ENCODE measurements at regions of chr6 and their contacts with region 1.

Region 1: GRCh38 chr6:26285143-26286134 is 79.6 kb upstream of the BTN3A2 start:
- DNase-seq: peak; percentile 89 to 98 (median 91)
- H3K4me3 ChIP-seq: peak overlapping the region; percentile 75
- H3K4me3 Mint-ChIP-seq: peak overlapping the region; percentile 83 to 97 (median 89)
- H3K27ac ChIP-seq: peak overlapping the region; percentile 97
- H3K27ac Mint-ChIP-seq: peak overlapping the region; percentile 93 to 98 (median 98)
- H3K4me1 ChIP-seq: peaks cover 15% of the 10 kb centered on the region
- H3K4me1 Mint-ChIP-seq: peaks cover 22 to 29% (median 23%) of the 10 kb centered on the region in 3 donors
- H3K27me3 ChIP-seq: no peaks in the 10 kb centered on the region
- H3K27me3 Mint-ChIP-seq: peaks cover 0 to 20% of the 10 kb centered on the region in 2 donors

Region 2: DNA sequence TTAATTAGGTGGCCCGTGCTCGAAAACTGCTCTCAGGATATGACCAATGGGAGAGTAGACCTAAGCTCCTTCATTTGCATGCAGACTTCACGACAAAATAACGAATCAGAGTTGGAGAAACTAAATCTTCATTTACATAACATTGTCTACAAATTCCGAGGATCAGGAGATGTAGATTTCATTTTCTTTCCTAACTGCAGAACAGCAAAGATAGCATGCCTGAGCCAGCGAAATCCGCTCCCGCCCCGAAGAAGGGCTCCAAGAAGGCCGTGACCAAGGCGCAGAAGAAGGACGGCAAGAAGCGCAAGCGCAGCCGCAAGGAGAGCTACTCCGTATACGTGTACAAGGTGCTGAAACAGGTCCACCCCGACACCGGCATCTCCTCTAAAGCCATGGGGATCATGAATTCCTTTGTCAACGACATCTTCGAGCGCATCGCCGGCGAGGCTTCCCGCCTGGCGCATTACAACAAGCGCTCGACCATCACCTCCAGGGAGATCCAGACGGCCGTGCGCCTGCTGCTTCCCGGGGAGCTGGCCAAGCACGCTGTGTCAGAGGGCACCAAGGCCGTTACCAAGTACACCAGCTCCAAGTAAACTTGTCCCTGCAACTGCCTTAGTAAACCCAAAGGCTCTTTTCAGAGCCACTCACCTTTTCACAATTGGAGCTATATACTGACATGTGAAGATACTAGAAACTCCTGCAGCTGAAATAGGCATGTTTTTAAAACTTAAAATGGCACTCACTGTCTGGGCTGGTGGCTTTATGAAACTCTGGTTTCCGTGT is 101.7 kb before region 1 on chr6:
- CTCF ChIA-PET with region 1: interaction called, 4 read pairs
- POLR2A ChIA-PET with region 1: interaction called, 22 read pairs
- DNase-seq: peak; percentile 31 to 78 (median 72)
- H3K4me3 ChIP-seq: peak overlapping the region; percentile 81
- H3K4me3 Mint-ChIP-seq: peak overlapping the region; percentile 86 to 99 (median 97)
- H3K27ac ChIP-seq: peak overlapping the region; percentile 71
- H3K27ac Mint-ChIP-seq: peak overlapping the region; percentile 71 to 99 (median 96)
- H3K4me1 ChIP-seq: peaks cover 33% of the 10 kb centered on the region
- H3K4me1 Mint-ChIP-seq: peaks cover 41 to 53% (median 44%) of the 10 kb centered on the region in 3 donors
- H3K27me3 ChIP-seq: no peaks in the 10 kb centered on the region
- H3K27me3 Mint-ChIP-seq: no peaks in the 10 kb centered on the region

Region 3: GRCh38 chr6:26223650-26224546 is 61.5 kb before region 1 on chr6:
- CTCF ChIA-PET with region 1: no interaction called
- POLR2A ChIA-PET with region 1: interaction called, 15 read pairs
- DNase-seq: peak; percentile 57 to 83 (median 78)
- H3K4me3 ChIP-seq: peak overlapping the region; percentile 87
- H3K4me3 Mint-ChIP-seq: no peak overlapping the region
- H3K27ac ChIP-seq: peak overlapping the region; percentile 72
- H3K27ac Mint-ChIP-seq: no peak overlapping the region
- H3K4me1 ChIP-seq: peaks cover 17% of the 10 kb centered on the region
- H3K4me1 Mint-ChIP-seq: peaks cover under 1 to 7% (median 7%) of the 10 kb centered on the region in 3 donors
- H3K27me3 ChIP-seq: no peaks in the 10 kb centered on the region
- H3K27me3 Mint-ChIP-seq: no peaks in the 10 kb centered on the region

Region 4: GRCh38 chr6:26249957-26250697 is 35.3 kb before region 1 on chr6:
- CTCF ChIA-PET with region 1: interaction called, 31 read pairs
- POLR2A ChIA-PET with region 1: interaction called, 59 read pairs
- DNase-seq: peak; percentile 58 to 89 (median 77)
- H3K4me3 ChIP-seq: peak overlapping the region; percentile 94
- H3K4me3 Mint-ChIP-seq: peak overlapping the region; percentile 95 to 99 (median 97)
- H3K27ac ChIP-seq: peak overlapping the region; percentile 74
- H3K27ac Mint-ChIP-seq: peak overlapping the region; percentile 56 to 96 (median 93)
- H3K4me1 ChIP-seq: peaks cover 10% of the 10 kb centered on the region
- H3K4me1 Mint-ChIP-seq: peaks cover 36 to 58% (median 48%) of the 10 kb centered on the region in 3 donors
- H3K27me3 ChIP-seq: no peaks in the 10 kb centered on the region
- H3K27me3 Mint-ChIP-seq: no peaks in the 10 kb centered on the region

Region 5: DNA sequence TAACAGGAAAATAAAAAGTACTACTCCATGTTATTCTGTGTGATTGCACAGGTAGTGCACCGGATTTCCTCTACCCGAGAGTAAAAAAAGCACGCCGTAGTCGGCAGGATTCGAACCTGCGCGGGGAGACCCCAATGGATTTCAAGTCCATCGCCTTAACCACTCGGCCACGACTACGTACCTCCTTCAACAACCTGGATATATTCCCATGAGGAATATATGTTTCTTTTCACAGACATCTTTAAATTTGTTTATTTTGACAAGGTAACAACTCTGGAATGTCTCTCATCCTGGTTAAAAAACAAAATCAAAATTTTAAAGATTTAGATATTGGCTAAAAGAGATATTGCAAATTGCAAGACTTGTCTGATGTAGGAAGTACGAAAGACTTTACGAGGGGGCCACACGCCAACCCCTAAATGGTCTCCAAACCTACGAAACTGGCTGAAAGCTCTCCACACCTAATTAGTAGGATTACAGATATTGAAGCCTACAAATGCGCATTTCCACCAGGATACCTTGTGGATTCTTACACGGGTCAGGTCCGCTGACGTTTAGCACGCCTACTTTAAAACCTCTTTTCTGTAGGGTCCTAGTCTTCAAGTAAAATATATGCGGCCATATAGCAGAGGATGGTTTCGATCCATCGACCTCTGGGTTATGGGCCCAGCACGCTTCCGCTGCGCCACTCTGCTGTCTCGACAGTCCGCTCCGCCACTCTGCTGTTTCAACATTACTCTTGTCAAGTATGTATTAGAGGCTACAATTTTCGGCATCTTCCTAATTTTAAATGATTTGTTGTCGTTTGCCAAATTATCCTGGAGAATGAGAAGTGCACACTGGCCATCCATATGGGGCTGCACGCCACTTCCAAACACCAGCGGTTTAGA is 27.3 kb after region 1 on chr6:
- CTCF ChIA-PET with region 1: interaction called, 6 read pairs
- POLR2A ChIA-PET with region 1: interaction called, 14 read pairs
- DNase-seq: peak; percentile 69 to 91 (median 81)
- H3K4me3 ChIP-seq: peak overlapping the region; percentile 89
- H3K4me3 Mint-ChIP-seq: peak overlapping the region; percentile 85 to 97 (median 94)
- H3K27ac ChIP-seq: peak overlapping the region; percentile 74
- H3K27ac Mint-ChIP-seq: peak overlapping the region; percentile 77 to 100 (median 92)
- H3K4me1 ChIP-seq: peaks cover 4% of the 10 kb centered on the region
- H3K4me1 Mint-ChIP-seq: peaks cover 39 to 60% (median 53%) of the 10 kb centered on the region in 3 donors
- H3K27me3 ChIP-seq: no peaks in the 10 kb centered on the region
- H3K27me3 Mint-ChIP-seq: peaks cover 2 to 24% of the 10 kb centered on the region in 2 donors

Region 6: GRCh38 chr6:26754212-26754611 is 468.8 kb after region 1 on chr6:
- CTCF ChIA-PET with region 1: no interaction called
- POLR2A ChIA-PET with region 1: no interaction called
- DNase-seq: no peak
- H3K4me3 ChIP-seq: no peak overlapping the region
- H3K4me3 Mint-ChIP-seq: peak overlapping the region in 2 of 7 donors; percentile 9 to 56
- H3K27ac ChIP-seq: no peak overlapping the region
- H3K27ac Mint-ChIP-seq: peak overlapping the region in 2 of 8 donors; percentile 77 to 81
- H3K4me1 ChIP-seq: no peaks in the 10 kb centered on the region
- H3K4me1 Mint-ChIP-seq: no peaks in the 10 kb centered on the region
- H3K27me3 ChIP-seq: peaks cover 4% of the 10 kb centered on the region
- H3K27me3 Mint-ChIP-seq: peaks cover 35 to 60% of the 10 kb centered on the region in 2 donors

Region 7: DNA sequence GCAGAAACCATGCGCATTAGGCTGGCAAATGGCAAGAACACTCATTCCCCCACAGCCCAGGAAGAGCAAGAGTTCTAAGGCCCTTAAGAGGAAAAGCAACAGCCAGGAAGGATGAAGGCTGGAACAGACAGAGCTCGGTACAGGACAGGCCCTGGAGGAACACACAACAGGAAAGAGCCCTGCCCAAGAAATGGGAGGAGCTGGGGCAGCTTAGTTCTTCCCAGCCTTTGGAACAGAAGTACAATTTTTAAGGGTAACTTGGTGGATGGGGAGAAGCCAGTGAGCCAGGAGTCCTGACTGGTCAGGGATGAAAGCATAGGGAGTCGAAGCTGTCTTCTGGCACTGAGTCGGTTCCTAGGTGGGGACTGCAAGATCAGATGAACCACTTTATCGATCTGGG is 1594.4 kb after region 1 on chr6:
- CTCF ChIA-PET with region 1: no interaction called
- POLR2A ChIA-PET with region 1: interaction called, 11 read pairs
- DNase-seq: no peak
- H3K4me3 ChIP-seq: no peak overlapping the region
- H3K4me3 Mint-ChIP-seq: no peak overlapping the region
- H3K27ac ChIP-seq: no peak overlapping the region
- H3K27ac Mint-ChIP-seq: peak overlapping the region in 2 of 8 donors; percentile 50 to 78
- H3K4me1 ChIP-seq: no peaks in the 10 kb centered on the region
- H3K4me1 Mint-ChIP-seq: no peaks in the 10 kb centered on the region
- H3K27me3 ChIP-seq: no peaks in the 10 kb centered on the region
- H3K27me3 Mint-ChIP-seq: peaks cover 0 to 1% of the 10 kb centered on the region in 2 donors